ENCODE measurements at regions of chr3 and their contacts with region 1.

Region 1: GRCh38 chr3:48847504-48848423 is at the start of gene PRKAR2A:
- DNase-seq: peak; percentile 93 to 96
- ATAC-seq: peak; percentile 92 to 96 (median 93)
- H3K4me3 ChIP-seq: peak within 1 kb of the TSS; percentile 91
- H3K27ac ChIP-seq: peak within 1 kb of the TSS; percentile 99
- H3K4me1 ChIP-seq: peaks cover 13% of the 10 kb centered on the region
- H3K27me3 ChIP-seq: no peaks in the 10 kb centered on the region
- CTCF ChIP-seq: no peak
- total RNA-seq, gene PRKAR2A: 66.2 to 126 (median 100) TPM

Region 2: GRCh38 chr3:48798998-48799397 is 48.8 kb before region 1 on chr3:
- intact Hi-C with region 1: loop called in 1 of 2 experiments (anchors 5 kb)
- DNase-seq: no peak
- ATAC-seq: no peak
- H3K4me3 ChIP-seq: no peak overlapping the region
- H3K27ac ChIP-seq: no peak overlapping the region
- H3K4me1 ChIP-seq: peaks cover 11% of the 10 kb centered on the region
- H3K27me3 ChIP-seq: no peaks in the 10 kb centered on the region
- CTCF ChIP-seq: no peak

Region 3: GRCh38 chr3:48898383-48899234 is 50.8 kb after region 1 on chr3 and contains the start of gene SLC25A20:
- intact Hi-C with region 1: loop called in 1 of 2 experiments (anchors 5 kb)
- DNase-seq: peak; percentile 95 to 97
- ATAC-seq: peak; percentile 98 to 99 (median 98)
- H3K4me3 ChIP-seq: peak within 1 kb of the TSS; percentile 78
- H3K27ac ChIP-seq: peak within 1 kb of the TSS; percentile 83
- H3K4me1 ChIP-seq: peaks cover 12% of the 10 kb centered on the region
- H3K27me3 ChIP-seq: no peaks in the 10 kb centered on the region
- CTCF ChIP-seq: no peak
- total RNA-seq, gene SLC25A20: 47.6 to 59.4 (median 50.5) TPM